ENCODE measurements at regions of chr2 and their contacts with region 1.

Region 1: DNA sequence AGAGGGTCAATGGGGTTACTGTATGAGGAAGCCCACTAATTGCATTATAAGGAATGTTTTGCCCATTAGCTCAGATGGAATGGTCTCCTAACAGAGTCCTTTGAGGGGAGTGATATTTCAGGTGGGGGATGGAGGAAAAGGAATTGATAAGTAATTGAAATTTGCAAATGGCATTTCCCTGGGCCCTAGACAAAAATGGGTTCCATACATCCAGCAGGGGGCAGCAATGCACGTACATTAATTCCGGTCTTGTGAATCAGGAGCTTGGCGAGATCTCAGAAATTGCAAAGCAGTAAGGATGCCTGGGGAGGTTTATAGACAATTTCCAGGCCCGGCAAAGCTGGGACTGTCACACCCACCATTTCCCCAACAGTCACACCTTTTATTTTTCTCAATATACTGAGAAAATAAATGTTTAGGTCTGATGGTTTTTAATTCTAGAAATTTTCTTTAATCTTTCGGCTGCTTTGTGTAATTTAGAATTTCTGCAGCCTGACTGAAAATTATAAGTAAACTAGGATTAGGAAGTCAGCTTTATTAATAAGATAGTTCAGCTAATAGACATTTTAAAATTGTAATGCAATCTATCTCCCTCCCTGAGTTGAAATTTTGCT is 122.8 kb downstream of the LYPD1 start:
- DNase-seq: peak in 5 of 6 donors; percentile 54 to 80 (median 73)
- ATAC-seq: peak; percentile 80 to 96 (median 92)
- H3K4me3 ChIP-seq: no peak overlapping the region
- H3K27ac ChIP-seq: no peak overlapping the region
- H3K4me1 ChIP-seq: no peaks in the 10 kb centered on the region
- H3K27me3 ChIP-seq: no peaks in the 10 kb centered on the region
- CTCF ChIP-seq: peak; percentile 45 to 70 (median 56)

Region 2: GRCh38 chr2:133171393-133172004 is 624.3 kb after region 1 on chr2:
- intact Hi-C with region 1: loop called in 2 of 3 experiments (anchors 5 kb)
- DNase-seq: peak in 1 of 6 donors; percentile 16
- ATAC-seq: peak; percentile 68 to 86 (median 84)
- H3K4me3 ChIP-seq: no peak overlapping the region
- H3K27ac ChIP-seq: no peak overlapping the region
- H3K4me1 ChIP-seq: no peaks in the 10 kb centered on the region
- H3K27me3 ChIP-seq: peaks cover 0 to under 1% (median 0%) of the 10 kb centered on the region in 4 donors
- CTCF ChIP-seq: peak; percentile 21 to 45 (median 36)

Measured in pancreas (tissue), 10 donors.